Panc1 (cell line): ENCODE measurements at regions of chr17 and their contacts with region 1.

Region 1: DNA sequence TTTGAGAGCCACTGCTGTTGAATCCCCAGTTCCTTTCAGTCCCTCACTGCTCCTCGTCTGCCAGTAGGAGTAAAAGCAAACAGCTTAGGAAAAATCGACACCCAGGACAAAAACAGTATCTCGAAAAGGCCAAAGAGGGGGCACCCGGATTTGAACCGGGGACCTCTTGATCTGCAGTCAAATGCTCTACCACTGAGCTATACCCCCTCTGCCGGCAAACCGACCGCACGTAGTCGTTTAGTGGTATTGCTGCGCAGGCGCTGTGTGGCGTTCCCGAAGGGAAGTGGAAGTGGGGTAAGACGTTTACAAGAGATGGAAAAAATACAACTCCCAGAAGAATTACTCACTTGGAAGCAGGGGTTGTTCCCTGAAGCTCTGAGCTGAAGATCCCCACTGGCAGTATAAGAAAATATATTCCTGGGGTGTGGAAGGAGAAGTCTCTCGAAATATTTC is 2.2 kb upstream of the PLXDC1 start:
- DNase-seq: peak; percentile 70
- ATAC-seq: peak; percentile 78
- H3K4me3 ChIP-seq: peak overlapping the region; percentile 84 to 92
- H3K27ac ChIP-seq: peak overlapping the region; percentile 72
- H3K4me1 ChIP-seq: peaks cover 5% of the 10 kb centered on the region; the same call in 1 of the 2 replicates
- H3K27me3 ChIP-seq: no peaks in the 10 kb centered on the region
- CTCF ChIP-seq: no peak

Region 2: DNA sequence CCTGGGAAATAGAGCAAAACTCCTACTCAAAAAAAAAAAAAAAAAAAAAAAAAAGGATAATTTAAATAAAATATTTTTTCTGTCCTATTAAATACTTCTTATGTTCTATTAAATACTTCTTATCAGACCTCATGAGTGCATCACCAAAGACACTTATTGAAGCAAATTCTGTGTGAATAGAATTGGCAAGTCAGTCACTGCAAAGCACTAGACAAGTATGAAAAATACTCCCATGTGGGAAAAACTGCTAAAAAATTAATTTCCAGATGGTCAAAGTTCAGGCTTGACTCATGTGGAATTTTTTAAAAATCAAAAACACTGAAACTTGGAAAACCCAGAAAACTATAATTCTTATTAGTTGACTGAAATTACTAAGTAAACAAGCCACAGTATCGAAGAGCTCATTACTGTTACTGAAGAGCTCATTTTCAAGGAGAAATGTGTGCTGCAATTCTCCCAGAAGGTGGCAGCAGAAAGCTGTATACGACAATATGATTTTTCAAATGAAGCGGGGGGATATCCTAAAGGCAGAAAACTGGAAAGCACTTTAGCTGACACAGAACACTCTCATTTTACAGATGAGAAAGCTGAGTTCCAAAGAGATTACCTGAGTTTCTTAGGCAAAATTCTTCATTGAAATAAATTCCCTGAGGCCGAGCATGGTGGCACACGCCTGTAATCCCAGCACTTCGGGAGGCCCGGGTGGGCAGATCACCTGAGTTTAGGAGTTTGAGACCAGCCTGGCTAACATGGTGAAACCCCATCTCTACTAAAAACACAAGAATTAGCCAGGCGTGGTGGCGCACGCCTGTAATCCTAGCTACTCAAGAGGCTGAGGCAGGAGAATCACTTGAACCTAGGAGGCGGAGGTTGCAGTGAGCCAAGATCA is 170.5 kb before region 1 on chr17:
- CTCF ChIA-PET with region 1: interaction called, 47 read pairs
- POLR2A ChIA-PET with region 1: no interaction called
- in situ Hi-C with region 1: no loop called
- intact Hi-C with region 1: loop called (anchors 5 kb)
- DNase-seq: no peak
- ATAC-seq: peak; percentile 80
- H3K4me3 ChIP-seq: no peak overlapping the region
- H3K27ac ChIP-seq: no peak overlapping the region
- H3K4me1 ChIP-seq: no peaks in the 10 kb centered on the region
- H3K27me3 ChIP-seq: no peaks in the 10 kb centered on the region
- CTCF ChIP-seq: peak; percentile 66

Region 3: GRCh38 chr17:39045948-39046679 is 107.5 kb before region 1 on chr17:
- CTCF ChIA-PET with region 1: no interaction called
- POLR2A ChIA-PET with region 1: no interaction called
- in situ Hi-C with region 1: no loop called
- intact Hi-C with region 1: no loop called
- DNase-seq: no peak
- ATAC-seq: no peak
- H3K4me3 ChIP-seq: no peak overlapping the region
- H3K27ac ChIP-seq: no peak overlapping the region
- H3K4me1 ChIP-seq: no peaks in the 10 kb centered on the region
- H3K27me3 ChIP-seq: no peaks in the 10 kb centered on the region
- CTCF ChIP-seq: no peak

Region 4: GRCh38 chr17:39077866-39078265 is 75.8 kb before region 1 on chr17:
- CTCF ChIA-PET with region 1: interaction called, 3 read pairs
- POLR2A ChIA-PET with region 1: no interaction called
- in situ Hi-C with region 1: no loop called
- intact Hi-C with region 1: loop called (anchors 10 kb)
- DNase-seq: no peak
- ATAC-seq: peak; percentile 21; the same call in 1 of the 2 replicates
- H3K4me3 ChIP-seq: no peak overlapping the region
- H3K27ac ChIP-seq: no peak overlapping the region
- H3K4me1 ChIP-seq: no peaks in the 10 kb centered on the region
- H3K27me3 ChIP-seq: no peaks in the 10 kb centered on the region
- CTCF ChIP-seq: no peak

Region 5: GRCh38 chr17:39164675-39165143 is 11.1 kb after region 1 on chr17:
- CTCF ChIA-PET with region 1: interaction called, 11 read pairs
- POLR2A ChIA-PET with region 1: no interaction called
- in situ Hi-C with region 1: no loop called
- intact Hi-C with region 1: no loop called
- DNase-seq: peak; percentile 25
- ATAC-seq: peak; percentile 87
- H3K4me3 ChIP-seq: peak overlapping the region; percentile 17 to 25
- H3K27ac ChIP-seq: 0 out of 2 replicates have a peak overlapping the region, but pooled peaks have one; percentile 23
- H3K4me1 ChIP-seq: peaks cover 4% of the 10 kb centered on the region; the same call in 1 of the 2 replicates
- H3K27me3 ChIP-seq: no peaks in the 10 kb centered on the region
- CTCF ChIP-seq: peak; percentile 76